Activated CD4-positive, alpha-beta T cell treated with anti-CD3 and anti-CD28 coated beads, Interleukin-2, amount 10 ng/mL, durations not matched to agents 24 days and 14 days (primary cell): ENCODE measurements at regions of chr1 and their contacts with region 1.

Region 1: GRCh38 chr1:108746372-108747205 is at the start of gene STXBP3:
- DNase-seq: peak; percentile 100
- H3K4me3 Mint-ChIP-seq: peak within 1 kb of the TSS; percentile 97
- H3K27ac Mint-ChIP-seq: peak within 1 kb of the TSS; percentile 97
- H3K4me1 Mint-ChIP-seq: peaks cover 27% of the 10 kb centered on the region
- H3K27me3 Mint-ChIP-seq: peaks cover 1% of the 10 kb centered on the region
- total RNA-seq, gene STXBP3: 41.1 and 48.9 TPM in 2 replicates

Region 2: GRCh38 chr1:108661030-108661620 is 85.5 kb before region 1 on chr1 and contains the start of gene HENMT1:
- intact Hi-C with region 1: loop called (anchors 2 kb)
- DNase-seq: peak; percentile 93
- H3K4me3 Mint-ChIP-seq: peak within 1 kb of the TSS; percentile 87
- H3K27ac Mint-ChIP-seq: peak within 1 kb of the TSS; percentile 97
- H3K4me1 Mint-ChIP-seq: peaks cover 34% of the 10 kb centered on the region
- H3K27me3 Mint-ChIP-seq: no peaks in the 10 kb centered on the region
- total RNA-seq, gene HENMT1: 17.5 and 17.7 TPM in 2 replicates

Region 3: GRCh38 chr1:108708691-108709660 is 37.6 kb before region 1 on chr1:
- intact Hi-C with region 1: loop called (anchors 2 kb)
- DNase-seq: peak; percentile 87
- H3K4me3 Mint-ChIP-seq: no peak overlapping the region
- H3K27ac Mint-ChIP-seq: no peak overlapping the region
- H3K4me1 Mint-ChIP-seq: peaks cover 19% of the 10 kb centered on the region
- H3K27me3 Mint-ChIP-seq: peaks cover 16% of the 10 kb centered on the region

Region 4: GRCh38 chr1:108963052-108963686 is 216.6 kb after region 1 on chr1 and contains the start of gene CLCC1:
- intact Hi-C with region 1: loop called (anchors 2 kb)
- DNase-seq: peak; percentile 98
- H3K4me3 Mint-ChIP-seq: peak within 1 kb of the TSS; percentile 91
- H3K27ac Mint-ChIP-seq: peak within 1 kb of the TSS; percentile 97
- H3K4me1 Mint-ChIP-seq: peaks cover 21% of the 10 kb centered on the region
- H3K27me3 Mint-ChIP-seq: peaks cover 7% of the 10 kb centered on the region
- total RNA-seq, gene CLCC1: 21.5 and 26.2 TPM in 2 replicates

Region 5: DNA sequence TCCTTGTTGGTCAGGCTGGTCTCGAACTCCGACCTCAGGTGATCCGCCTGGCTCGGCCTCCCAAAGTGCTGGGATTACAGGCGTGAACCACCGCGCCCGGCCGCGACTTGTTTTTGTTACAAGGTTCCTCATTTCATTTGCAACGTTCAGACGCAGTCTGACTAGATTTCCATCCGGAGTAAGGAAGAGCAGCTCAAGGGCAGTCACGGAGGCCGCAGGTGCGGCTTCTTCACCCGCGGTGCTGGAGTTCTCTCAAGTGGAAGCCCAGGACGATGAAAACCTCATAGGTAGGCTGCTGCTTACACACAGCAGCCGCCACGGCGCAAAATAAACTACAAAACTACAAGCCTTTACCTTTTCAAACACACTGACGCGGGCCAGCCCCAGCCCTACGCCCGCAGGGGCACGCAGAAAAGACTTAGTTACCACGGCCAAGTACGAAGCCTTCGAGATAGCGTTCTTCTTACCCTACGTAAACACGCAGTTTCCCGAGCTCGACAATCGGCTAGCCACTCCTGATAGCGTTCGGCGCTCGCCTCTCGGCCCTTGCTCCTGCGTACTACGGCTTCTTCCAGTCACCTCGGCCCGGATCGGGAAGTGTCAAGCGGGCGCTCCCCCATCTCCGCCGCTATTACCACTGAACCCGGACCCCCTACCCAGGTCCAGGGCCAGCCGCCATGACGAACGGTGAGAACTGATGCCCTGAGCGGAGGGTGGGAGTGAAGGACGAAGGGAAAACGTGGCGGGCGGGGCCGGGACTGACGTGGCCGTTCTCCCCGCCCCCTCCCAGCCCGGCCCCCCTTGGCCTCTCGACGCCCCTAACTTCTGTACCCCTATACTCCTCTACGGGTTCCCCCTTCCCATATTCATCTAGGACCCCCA is 343.8 kb after region 1 on chr1 and contains the start of gene TMEM167B:
- intact Hi-C with region 1: loop called (anchors 5 kb)
- DNase-seq: peak; percentile 96
- H3K4me3 Mint-ChIP-seq: peak within 1 kb of the TSS; percentile 92
- H3K27ac Mint-ChIP-seq: peak within 1 kb of the TSS; percentile 97
- H3K4me1 Mint-ChIP-seq: peaks cover 23% of the 10 kb centered on the region
- H3K27me3 Mint-ChIP-seq: no peaks in the 10 kb centered on the region
- total RNA-seq, gene TMEM167B: 26.7 and 29.2 TPM in 2 replicates